ENCODE measurements at regions of chr22 and their contacts with region 1.

Region 1: DNA sequence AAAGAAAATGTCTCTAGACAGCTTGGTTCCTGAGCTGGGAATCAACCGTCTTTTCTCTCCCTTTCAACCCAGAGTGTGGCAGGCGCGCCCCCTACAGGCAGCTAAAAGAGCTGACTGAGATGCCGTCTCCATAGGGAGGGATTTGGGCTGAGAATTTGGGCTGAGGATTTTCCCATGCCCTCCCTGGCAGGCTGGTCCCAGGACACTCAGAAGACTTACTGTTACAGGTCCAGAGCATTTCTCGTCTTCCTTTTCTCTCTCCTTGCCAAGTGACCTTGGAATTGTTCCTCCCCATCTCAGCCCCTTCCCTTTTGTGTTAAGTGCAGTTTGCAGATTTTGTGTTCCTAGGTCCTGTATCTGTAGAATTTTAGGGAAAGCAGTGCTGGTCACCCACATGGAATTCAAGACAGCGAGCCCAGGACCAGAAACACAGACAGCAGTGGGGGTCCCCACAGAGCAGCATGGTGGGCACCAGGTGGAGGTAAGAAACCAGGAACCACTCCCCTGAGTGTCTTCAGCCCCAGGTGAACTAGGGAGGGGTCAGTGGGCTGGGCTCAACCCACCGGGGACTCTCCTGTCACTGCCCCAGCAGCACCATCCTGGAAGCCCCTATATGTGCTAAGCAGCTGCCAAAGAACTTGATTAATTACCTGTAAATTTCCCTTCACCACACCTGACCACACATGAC is 9.9 kb upstream of the IGLL5 start:
- DNase-seq: peak; percentile 79
- H3K4me3 Mint-ChIP-seq: no peak overlapping the region
- H3K27ac Mint-ChIP-seq: no peak overlapping the region
- H3K4me1 Mint-ChIP-seq: no peaks in the 10 kb centered on the region
- H3K27me3 Mint-ChIP-seq: peaks cover 68% of the 10 kb centered on the region
- CTCF ChIP-seq: peak; percentile 81

Region 2: DNA sequence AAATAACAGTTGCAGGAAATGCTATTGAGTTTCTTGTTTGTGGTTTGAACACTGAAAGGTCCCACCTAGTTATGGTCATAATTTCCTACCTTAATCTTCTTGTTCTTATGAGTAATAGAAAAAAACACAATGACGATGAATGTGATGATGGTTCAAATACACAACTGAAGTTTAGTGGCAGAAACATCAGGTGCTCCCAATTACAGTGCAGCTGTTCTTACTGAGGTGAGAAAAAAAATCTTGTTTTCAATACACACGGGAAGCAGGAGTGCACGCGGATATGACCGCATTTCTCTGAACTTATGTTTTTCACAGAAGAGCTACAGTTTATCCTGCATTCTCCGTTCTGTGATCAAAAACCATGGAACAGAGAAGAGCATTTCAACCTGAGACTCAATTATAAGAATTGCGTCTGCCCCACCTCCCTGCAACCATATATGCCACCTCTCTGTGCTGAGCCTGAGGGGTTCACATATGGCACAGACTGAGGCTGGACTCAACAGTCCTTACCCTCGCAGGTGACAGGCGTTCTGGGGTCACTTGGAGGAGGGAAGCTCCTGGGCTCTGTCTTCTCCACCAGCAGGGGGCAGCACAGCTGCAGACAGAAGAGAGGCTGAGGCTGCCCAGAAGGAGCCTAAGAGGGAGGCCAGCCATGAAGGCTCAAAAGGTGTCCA is 89.7 kb before region 1 on chr22:
- CTCF ChIA-PET with region 1: interaction called, 10 read pairs
- intact Hi-C with region 1: no loop called
- DNase-seq: peak; percentile 78
- H3K4me3 Mint-ChIP-seq: no peak overlapping the region
- H3K27ac Mint-ChIP-seq: no peak overlapping the region
- H3K4me1 Mint-ChIP-seq: no peaks in the 10 kb centered on the region
- H3K27me3 Mint-ChIP-seq: peaks cover 66% of the 10 kb centered on the region
- CTCF ChIP-seq: peak; percentile 83

Region 3: DNA sequence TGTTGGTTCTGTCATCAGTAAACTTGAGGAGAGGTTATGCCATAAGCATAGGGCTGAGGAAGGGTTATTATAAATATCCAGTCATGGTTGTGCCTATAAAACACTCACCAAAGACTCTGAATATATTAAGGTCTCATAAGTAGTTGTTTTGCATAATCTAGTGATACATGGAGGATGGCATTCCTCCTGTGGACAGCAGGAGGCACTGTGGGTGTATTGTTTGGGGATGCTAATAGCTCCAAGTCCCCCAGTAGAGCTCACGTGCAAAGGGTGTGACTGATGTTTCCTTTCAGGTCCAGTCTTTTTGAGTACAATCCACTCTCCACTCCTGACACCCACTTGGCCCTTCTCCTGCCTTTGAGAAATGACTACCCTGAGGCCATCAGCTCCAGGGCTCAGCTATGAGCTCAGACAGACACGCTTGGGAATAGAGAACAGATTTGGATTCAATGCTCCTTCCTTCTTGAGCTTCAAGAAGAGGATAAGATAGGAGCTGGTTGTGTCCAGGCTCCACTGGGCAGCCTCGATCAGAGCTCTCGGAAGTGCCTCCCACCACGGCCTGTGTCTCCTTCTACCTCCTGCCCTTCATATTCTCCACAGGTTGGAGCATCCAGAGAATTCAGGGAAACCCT is 75.2 kb before region 1 on chr22:
- CTCF ChIA-PET with region 1: interaction called, 3 read pairs
- intact Hi-C with region 1: loop called (anchors 10 kb)
- DNase-seq: no peak
- H3K4me3 Mint-ChIP-seq: no peak overlapping the region
- H3K27ac Mint-ChIP-seq: no peak overlapping the region
- H3K4me1 Mint-ChIP-seq: no peaks in the 10 kb centered on the region
- H3K27me3 Mint-ChIP-seq: peaks cover 87% of the 10 kb centered on the region
- CTCF ChIP-seq: peak; percentile 31

Region 4: DNA sequence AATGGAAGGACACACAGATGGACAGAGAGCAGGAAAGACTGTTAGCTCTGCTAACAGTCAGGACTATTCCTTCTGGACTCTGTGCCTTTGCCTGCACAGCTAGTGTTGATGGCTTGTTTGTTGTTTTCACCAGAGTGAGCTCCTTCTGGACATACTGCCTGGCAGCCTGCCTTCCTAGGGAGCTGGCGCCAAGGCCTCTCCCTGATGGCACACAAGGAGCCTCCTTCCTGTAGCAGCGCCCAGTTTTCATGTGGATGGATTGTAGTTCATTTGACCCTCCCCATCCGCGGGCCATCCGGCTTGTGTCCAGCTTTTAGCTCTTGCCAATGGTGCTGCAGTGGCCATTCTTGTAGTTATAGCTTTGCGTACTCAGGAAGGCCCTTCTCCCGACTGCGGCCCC is 286.0 kb after region 1 on chr22:
- CTCF ChIA-PET with region 1: no interaction called
- intact Hi-C with region 1: no loop called
- DNase-seq: no peak
- H3K4me3 Mint-ChIP-seq: no peak overlapping the region
- H3K27ac Mint-ChIP-seq: no peak overlapping the region
- H3K4me1 Mint-ChIP-seq: no peaks in the 10 kb centered on the region
- H3K27me3 Mint-ChIP-seq: no peaks in the 10 kb centered on the region
- CTCF ChIP-seq: no peak